ENCODE measurements at regions of chr15 and their contacts with region 1.

Region 1: DNA sequence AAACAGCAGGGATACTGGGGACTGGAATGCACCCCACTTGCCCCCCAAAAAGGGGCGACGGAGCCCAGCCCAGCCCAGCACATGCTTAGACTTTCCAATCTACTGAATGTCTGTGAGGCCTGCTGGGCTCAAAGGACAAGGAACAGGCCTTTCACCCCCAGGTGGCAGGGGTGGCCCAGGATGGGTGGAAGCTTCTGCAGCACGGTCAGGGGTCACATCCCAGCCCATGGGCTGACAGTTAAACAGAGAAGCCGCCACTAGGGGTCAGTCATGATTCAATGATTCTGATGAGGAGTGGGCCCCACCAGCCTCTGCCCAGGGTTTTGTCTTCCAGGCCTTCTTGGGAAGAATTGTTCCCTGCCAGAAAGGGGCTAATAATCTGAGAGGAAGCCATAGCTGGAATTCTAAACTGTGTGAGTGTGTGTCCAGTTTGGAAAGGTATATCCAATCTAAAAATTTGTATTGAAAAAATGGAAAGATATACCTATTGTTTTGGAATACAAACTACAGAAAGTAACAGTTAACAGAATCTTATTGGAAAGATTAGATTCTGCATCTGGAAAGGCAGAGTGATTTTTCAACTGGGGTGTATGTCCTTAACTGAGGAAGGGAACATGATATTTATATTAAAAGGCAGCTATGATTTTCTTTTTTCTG is 2.2 kb downstream of the CHRNB4 start:
- DNase-seq: peak; percentile 62
- ATAC-seq: peak; percentile 94
- H3K4me3 ChIP-seq: no peak overlapping the region
- H3K27ac ChIP-seq: no peak overlapping the region
- H3K4me1 ChIP-seq: no peaks in the 10 kb centered on the region
- H3K27me3 ChIP-seq: peaks cover 0 to 8% of the 10 kb centered on the region in 2 experiments; a peak in 2 of 5 replicates
- CTCF ChIP-seq: peak; percentile 81
- EP300 ChIP-seq: no peak
- POLR2A ChIP-seq: no peak
- RAD21 ChIP-seq: peak; percentile 83

Region 2: DNA sequence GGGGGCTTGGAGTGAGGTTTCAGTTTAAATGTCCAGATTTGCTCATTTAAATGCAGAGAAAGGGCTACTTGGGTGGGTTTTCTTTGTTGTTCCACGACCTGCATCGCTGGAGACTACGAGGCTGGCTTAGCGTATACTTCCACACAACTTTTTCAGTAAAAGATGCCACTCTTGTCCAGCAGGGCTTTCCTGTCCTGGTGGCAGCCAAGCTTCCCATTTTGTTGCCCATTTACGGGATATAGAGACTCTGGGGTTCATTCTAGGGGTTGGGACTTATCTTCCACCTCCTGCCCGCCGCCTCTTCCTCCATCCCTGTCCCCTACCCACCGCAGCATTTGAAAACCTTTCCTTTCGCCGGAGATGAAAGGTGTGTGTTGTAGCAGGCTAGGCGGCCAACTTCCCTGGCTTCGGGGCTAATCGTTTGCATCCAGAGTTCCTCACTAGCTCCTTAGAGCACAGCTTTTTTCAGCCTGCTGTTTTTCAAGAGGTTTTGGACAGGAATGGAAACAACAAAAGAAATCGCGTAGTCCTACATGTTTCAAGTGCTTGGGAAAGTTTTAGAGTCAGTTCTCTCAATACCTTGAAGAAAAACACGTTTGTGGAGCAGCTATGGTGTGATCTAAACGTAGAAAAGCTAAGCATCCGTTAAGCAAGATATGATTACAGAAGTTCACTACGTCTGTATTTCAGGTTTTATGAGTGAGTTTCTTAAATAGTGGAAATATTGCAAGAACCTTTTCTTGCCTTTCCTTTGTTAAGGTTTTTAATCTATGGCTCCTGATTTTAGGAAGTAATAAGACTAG is 72.6 kb before region 1 on chr15:
- CTCF ChIA-PET with region 1: no interaction called
- POLR2A ChIA-PET with region 1: no interaction called
- in situ Hi-C with region 1: no loop called
- intact Hi-C with region 1: no loop called
- DNase-seq: peak; percentile 24
- ATAC-seq: peak; percentile 57
- H3K4me3 ChIP-seq: peak overlapping the region; percentile 61 to 80 (median 73)
- H3K27ac ChIP-seq: no peak overlapping the region
- H3K4me1 ChIP-seq: peaks cover 18% of the 10 kb centered on the region
- H3K27me3 ChIP-seq: no peaks in the 10 kb centered on the region
- CTCF ChIP-seq: no peak
- EP300 ChIP-seq: no peak
- POLR2A ChIP-seq: no peak
- RAD21 ChIP-seq: no peak

Region 3: GRCh38 chr15:78695854-78696253 is 57.1 kb after region 1 on chr15:
- CTCF ChIA-PET with region 1: no interaction called
- POLR2A ChIA-PET with region 1: no interaction called
- in situ Hi-C with region 1: no loop called
- intact Hi-C with region 1: no loop called
- DNase-seq: no peak
- ATAC-seq: no peak; the same call in 2 of the 3 replicates
- H3K4me3 ChIP-seq: no peak overlapping the region
- H3K27ac ChIP-seq: no peak overlapping the region
- H3K4me1 ChIP-seq: no peaks in the 10 kb centered on the region
- H3K27me3 ChIP-seq: 0 out of 5 replicates have a peak, but pooled peaks cover 0 to 3% of the 10 kb centered on the region in 2 experiments
- CTCF ChIP-seq: no peak; the same call in 1 of the 2 replicates
- EP300 ChIP-seq: no peak
- POLR2A ChIP-seq: no peak
- RAD21 ChIP-seq: no peak

Region 4: DNA sequence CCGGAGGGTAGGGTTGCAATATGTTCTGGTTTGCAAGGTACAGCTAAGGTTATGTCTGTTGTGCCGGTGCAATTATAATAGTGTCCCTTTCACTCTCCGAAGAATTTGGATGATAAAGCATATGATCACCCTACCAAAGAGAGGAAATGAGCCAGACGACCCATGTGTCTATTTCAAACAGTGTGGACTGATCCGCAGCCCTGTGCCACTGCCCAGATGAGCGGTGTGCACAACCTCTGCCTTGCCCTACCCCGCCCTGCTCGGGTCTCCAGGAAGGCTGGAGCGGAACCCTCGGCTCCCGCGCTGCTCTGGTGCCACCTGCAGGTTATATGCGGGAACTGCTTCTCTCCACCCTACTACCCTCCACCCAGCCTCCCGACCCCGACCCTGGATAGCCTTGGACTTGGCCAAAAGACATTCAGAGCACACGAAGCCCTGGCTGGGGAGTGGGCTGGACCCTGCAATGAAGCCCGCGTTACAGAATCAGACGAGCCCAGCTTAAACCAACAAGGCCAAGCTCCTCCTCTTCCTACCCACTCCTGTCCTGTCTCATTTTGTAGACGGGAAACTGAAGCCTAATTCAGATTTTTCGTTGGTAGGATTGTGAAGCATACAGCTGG is 70.6 kb after region 1 on chr15:
- CTCF ChIA-PET with region 1: interaction called, 27 read pairs
- POLR2A ChIA-PET with region 1: no interaction called
- in situ Hi-C with region 1: loop called (anchors 5 kb)
- intact Hi-C with region 1: loop called (anchors 1 kb)
- DNase-seq: peak; percentile 39
- ATAC-seq: peak; percentile 98
- H3K4me3 ChIP-seq: no peak overlapping the region
- H3K27ac ChIP-seq: no peak overlapping the region
- H3K4me1 ChIP-seq: peaks cover 6% of the 10 kb centered on the region
- H3K27me3 ChIP-seq: no peaks in the 10 kb centered on the region
- CTCF ChIP-seq: peak; percentile 90
- EP300 ChIP-seq: no peak
- POLR2A ChIP-seq: no peak
- RAD21 ChIP-seq: peak; percentile 95